Posterior cingulate gyrus (tissue), 11 donors: ENCODE measurements at regions of chr9 and their contacts with region 1.

Region 1: DNA sequence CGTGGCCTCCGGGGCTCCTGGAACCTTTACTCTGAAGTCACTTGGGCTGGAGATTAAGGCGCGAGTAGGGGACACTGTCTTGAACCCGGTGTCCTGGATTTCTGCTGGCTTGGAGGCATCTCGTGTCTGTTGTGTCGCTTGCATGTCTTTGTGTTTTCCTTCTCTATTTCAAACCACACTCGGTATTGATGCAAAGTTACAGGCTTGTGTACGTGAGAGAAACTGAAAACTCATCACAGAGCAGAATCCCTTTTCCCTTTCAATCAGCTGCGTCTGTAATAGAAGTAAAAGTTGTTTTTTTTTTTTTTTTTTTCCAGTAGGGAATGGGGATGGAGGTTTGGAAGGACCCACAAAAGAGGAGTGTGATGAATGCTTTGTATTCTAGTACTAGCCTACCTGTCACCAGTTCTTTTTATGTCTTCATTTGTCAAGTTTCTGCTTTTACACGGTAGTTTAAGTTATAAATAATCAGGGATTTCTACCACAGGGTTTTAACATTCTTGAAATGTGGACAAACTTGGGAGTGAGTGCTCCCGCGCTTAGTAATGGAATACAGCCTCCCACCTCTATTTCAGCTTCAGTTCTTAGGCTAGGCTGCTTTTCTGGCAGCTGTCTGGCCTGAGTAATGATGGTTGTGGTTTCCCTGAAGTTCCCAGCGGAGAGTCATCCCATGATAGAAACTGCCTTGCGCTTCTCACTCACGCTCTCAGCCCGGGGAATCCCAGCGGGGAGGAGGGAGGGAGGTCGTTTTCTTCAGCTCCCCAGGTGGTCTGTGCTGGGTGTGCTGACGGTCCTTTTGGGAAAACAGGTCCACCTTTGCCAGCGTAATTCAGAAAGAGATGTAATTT is 763 bp downstream of the TJP2 start:
- DNase-seq: peak in 4 of 10 donors; percentile 13 to 85 (median 35)

Region 2: DNA sequence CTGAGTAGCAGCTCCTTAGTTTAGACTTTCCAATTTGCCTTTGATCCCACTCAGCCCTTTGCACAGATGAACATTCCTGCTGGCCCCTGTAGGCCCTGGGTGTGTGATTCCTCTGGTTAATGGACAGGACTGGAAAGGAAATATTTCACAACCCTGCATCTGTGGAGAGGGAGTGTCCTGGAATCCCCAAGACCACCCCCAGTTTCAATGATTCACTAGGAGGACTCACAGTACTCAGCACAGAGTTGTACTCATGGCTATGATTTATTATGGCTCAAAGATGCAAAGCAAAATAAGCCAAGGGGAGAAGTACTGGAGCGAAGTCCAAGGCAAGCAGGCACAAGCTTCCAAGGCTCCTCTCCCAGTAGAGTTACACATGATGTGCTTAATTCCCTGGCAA is 43.2 kb before region 1 on chr9:
- intact Hi-C with region 1: loop called (anchors 5 kb)
- DNase-seq: no peak

Region 3: DNA sequence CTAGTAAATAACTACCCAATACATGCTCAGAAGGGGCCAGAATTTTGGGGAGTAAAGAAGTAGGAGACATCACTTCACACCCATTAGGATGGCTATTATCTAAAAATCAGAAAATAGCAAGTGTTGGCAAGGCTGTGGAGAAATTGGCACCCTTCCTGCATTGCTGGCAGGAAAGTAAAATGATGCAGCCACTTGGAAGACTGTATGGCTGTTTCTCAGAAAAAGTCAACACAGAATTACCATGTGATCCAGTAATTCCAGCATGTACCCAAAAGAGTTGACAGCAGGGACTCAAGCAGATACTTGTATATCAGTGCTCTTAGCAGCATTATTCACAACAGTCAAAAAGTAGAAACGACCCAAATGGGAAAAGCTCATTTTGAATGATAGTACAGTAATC is 389.7 kb after region 1 on chr9:
- intact Hi-C with region 1: no loop called
- DNase-seq: no peak